Sigmoid colon (tissue), 7 donors: ENCODE measurements at regions of chr2 and their contacts with region 1.

Region 1: GRCh38 chr2:163345908-163346573 is 389.8 kb downstream of the FIGN start:
- DNase-seq: no peak
- H3K4me3 ChIP-seq: no peak overlapping the region
- H3K27ac ChIP-seq: no peak overlapping the region
- H3K4me1 ChIP-seq: peaks cover 0 to 13% (median 7%) of the 10 kb centered on the region in 4 donors
- H3K27me3 ChIP-seq: no peaks in the 10 kb centered on the region
- CTCF ChIP-seq: peak in 3 of 4 experiments; percentile 56 to 77 (median 74)
- EP300 ChIP-seq: no peak
- POLR2A ChIP-seq: no peak

Region 2: DNA sequence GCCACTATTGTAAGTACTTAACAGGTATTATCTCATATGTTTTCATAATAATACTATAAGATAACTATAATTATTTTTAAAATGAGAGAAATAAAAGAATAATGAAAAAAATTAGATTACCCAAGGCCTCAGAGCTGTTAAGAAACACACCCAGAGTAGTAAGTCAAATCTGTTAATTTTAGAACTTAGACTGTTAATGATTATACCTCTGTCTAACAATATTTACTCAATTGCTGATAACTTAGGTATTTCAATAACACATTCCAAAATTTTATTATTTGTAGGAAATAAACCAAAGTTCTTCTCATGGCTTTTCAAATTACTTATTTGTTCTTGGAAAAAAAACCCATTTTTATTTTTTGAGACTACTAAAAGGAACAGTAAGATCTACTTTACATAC is 280.0 kb before region 1 on chr2:
- intact Hi-C with region 1: no loop called
- DNase-seq: no peak
- H3K4me3 ChIP-seq: no peak overlapping the region
- H3K27ac ChIP-seq: no peak overlapping the region
- H3K4me1 ChIP-seq: no peaks in the 10 kb centered on the region
- H3K27me3 ChIP-seq: no peaks in the 10 kb centered on the region
- CTCF ChIP-seq: no peak
- EP300 ChIP-seq: no peak
- POLR2A ChIP-seq: no peak

Region 3: GRCh38 chr2:164429354-164429753 is 1083.3 kb after region 1 on chr2:
- intact Hi-C with region 1: loop called (anchors 5 kb)
- DNase-seq: no peak
- H3K4me3 ChIP-seq: no peak overlapping the region
- H3K27ac ChIP-seq: no peak overlapping the region
- H3K4me1 ChIP-seq: no peaks in the 10 kb centered on the region
- H3K27me3 ChIP-seq: no peaks in the 10 kb centered on the region
- CTCF ChIP-seq: no peak
- EP300 ChIP-seq: no peak
- POLR2A ChIP-seq: no peak